ENCODE measurements at regions of chr16 and their contacts with region 1.

Region 1: DNA sequence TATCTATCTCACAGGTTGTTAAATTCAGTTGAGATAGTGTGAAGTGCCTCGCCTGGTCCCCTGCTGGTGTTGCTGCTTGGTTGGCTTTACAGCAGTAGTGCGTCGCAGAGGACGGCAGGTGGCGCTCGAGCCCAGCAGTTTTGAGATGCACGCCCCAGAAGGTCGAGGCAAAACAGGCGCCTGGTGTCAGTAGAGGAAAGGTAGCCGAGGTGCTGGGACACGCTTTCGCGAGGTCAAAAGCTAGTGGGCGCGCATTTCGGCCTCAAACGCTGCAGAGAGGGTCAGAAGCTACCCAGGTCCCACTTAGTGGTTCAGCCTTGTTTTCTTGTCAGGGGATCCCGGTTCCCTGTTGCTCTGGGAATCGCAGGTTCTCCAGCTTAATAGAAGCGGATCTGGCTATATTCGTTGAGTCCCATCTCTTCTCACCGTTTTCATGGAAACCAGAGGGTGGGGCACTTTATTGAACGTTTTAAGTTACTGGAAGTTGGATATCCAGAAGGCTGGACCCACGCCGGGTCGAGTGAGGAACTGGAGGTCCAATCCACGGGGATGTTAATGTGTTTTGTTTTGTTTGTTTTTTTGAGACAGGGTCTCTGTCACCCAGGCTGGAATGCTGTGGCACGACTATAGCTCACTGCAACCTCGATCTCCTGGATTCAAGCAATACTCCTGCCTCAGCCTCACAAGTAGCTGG is 10.3 kb upstream of the ZFP90 start:
- DNase-seq: peak; percentile 95
- H3K4me3 Mint-ChIP-seq: peak overlapping the region; percentile 53
- H3K27ac Mint-ChIP-seq: no peak overlapping the region
- H3K4me1 Mint-ChIP-seq: peaks cover 18% of the 10 kb centered on the region
- H3K27me3 Mint-ChIP-seq: no peaks in the 10 kb centered on the region

Region 2: GRCh38 chr16:68590201-68590994 is 61.6 kb after region 1 on chr16:
- CTCF ChIA-PET with region 1: interaction called, 56 read pairs
- intact Hi-C with region 1: loop called (anchors 2 kb)
- DNase-seq: peak; percentile 83
- H3K4me3 Mint-ChIP-seq: peak overlapping the region; percentile 17
- H3K27ac Mint-ChIP-seq: peak overlapping the region; percentile 52
- H3K4me1 Mint-ChIP-seq: peaks cover 4% of the 10 kb centered on the region
- H3K27me3 Mint-ChIP-seq: no peaks in the 10 kb centered on the region

Region 3: GRCh38 chr16:68704232-68704867 is 175.5 kb after region 1 on chr16:
- CTCF ChIA-PET with region 1: interaction called, 6 read pairs
- intact Hi-C with region 1: loop called (anchors 2 kb)
- DNase-seq: peak; percentile 85
- H3K4me3 Mint-ChIP-seq: no peak overlapping the region
- H3K27ac Mint-ChIP-seq: no peak overlapping the region
- H3K4me1 Mint-ChIP-seq: peaks cover 3% of the 10 kb centered on the region
- H3K27me3 Mint-ChIP-seq: no peaks in the 10 kb centered on the region

Region 4: DNA sequence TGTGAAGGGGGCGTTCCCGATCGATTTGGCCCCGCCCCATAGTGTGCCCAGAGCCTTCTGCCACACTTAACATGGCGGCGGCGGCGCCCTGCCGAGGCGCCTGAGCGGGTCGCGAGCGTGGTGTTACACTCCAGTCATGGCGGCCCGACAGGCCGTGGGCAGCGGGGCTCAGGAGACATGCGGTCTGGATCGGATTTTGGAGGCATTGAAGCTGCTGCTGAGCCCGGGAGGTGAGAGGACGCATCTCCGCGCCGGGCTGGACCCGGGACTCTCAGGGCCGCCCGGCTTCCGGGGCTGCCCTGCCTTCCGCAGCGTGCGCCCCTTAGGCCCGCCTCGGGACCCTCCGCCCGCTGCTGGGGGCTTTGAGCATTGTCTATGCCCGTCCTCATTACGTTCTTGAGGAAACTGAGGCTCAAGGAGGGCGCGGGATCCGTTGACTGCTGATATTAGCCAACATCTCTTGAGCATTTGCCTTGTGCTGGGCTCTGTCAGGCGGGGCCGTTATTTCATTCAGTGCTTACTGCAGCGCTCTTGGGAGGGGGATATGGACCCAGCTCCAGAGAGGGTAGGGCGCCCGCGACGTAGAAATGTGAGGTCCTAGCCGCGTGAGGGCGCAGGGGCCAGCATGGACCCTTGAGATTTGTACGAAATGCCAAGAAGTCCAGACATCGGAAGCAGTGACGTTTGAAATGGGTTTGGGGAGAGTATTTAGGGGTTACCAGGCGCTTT is 314.8 kb after region 1 on chr16 and contains the start of gene TANGO6:
- CTCF ChIA-PET with region 1: interaction called, 4 read pairs
- intact Hi-C with region 1: loop called (anchors 1 kb)
- DNase-seq: peak; percentile 95
- H3K4me3 Mint-ChIP-seq: peak within 1 kb of the TSS; percentile 96
- H3K27ac Mint-ChIP-seq: peak within 1 kb of the TSS; percentile 89
- H3K4me1 Mint-ChIP-seq: peaks cover 27% of the 10 kb centered on the region
- H3K27me3 Mint-ChIP-seq: no peaks in the 10 kb centered on the region
- total RNA-seq, gene TANGO6: 21.6 to 22.3 TPM

Region 5: GRCh38 chr16:69123910-69124309 is 595.1 kb after region 1 on chr16:
- CTCF ChIA-PET with region 1: interaction called, 5 read pairs
- intact Hi-C with region 1: loop called (anchors 2 kb)
- DNase-seq: peak; percentile 74
- H3K4me3 Mint-ChIP-seq: no peak overlapping the region
- H3K27ac Mint-ChIP-seq: no peak overlapping the region
- H3K4me1 Mint-ChIP-seq: peaks cover 18% of the 10 kb centered on the region
- H3K27me3 Mint-ChIP-seq: no peaks in the 10 kb centered on the region

Measured in activated naive CD4-positive, alpha-beta T cell treated with anti-CD3 and anti-CD28 coated beads for 36 hours (primary cell).